IMR-90 (cell line): ENCODE measurements at regions of chr5 and their contacts with region 1.

Region 1: GRCh38 chr5:80960531-80961375 is 590 bp downstream of the RASGRF2 start:
- DNase-seq: peak; percentile 21
- ATAC-seq: peak; percentile 70
- H3K4me3 ChIP-seq: peak overlapping the region; percentile 86
- H3K27ac ChIP-seq: peak overlapping the region; percentile 86
- H3K4me1 ChIP-seq: peaks cover 7% of the 10 kb centered on the region; the same call in 1 of the 2 replicates
- H3K27me3 ChIP-seq: no peaks in the 10 kb centered on the region
- CTCF ChIP-seq: peak; percentile 30
- POLR2A ChIP-seq: no peak
- RAD21 ChIP-seq: no peak; the same call in 1 of the 2 replicates

Region 2: DNA sequence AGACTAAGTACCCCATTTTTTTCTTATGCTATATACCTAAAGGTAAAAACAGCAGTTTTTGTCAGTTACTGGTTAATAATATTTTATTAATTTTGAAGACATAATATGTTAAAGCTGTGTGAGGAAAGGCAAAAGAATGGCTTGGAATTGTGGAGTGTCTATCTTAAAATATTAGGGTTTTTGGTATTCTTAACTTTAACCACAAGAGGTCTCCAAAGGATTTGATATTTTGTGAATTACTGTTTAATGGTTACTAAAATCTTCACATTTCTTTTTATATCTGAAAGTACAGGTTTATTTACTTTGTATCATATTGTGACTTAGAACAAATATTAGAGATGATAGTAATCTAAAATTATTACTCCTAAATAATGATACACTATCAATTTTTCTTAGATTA is 274.0 kb before region 1 on chr5:
- CTCF ChIA-PET with region 1: no interaction called
- POLR2A ChIA-PET with region 1: no interaction called
- dilution Hi-C with region 1: no loop called
- in situ Hi-C with region 1: no loop called
- intact Hi-C with region 1: loop called (anchors 2 kb)
- DNase-seq: peak; percentile 36
- ATAC-seq: peak; percentile 44; the same call in 1 of the 2 replicates
- H3K4me3 ChIP-seq: no peak overlapping the region
- H3K27ac ChIP-seq: no peak overlapping the region
- H3K4me1 ChIP-seq: peaks cover 2% of the 10 kb centered on the region; the same call in 1 of the 2 replicates
- H3K27me3 ChIP-seq: no peaks in the 10 kb centered on the region
- CTCF ChIP-seq: peak; percentile 58
- POLR2A ChIP-seq: no peak
- RAD21 ChIP-seq: peak; percentile 60

Region 3: GRCh38 chr5:80736730-80737129 is 224.0 kb before region 1 on chr5:
- CTCF ChIA-PET with region 1: no interaction called
- POLR2A ChIA-PET with region 1: no interaction called
- dilution Hi-C with region 1: no loop called
- in situ Hi-C with region 1: no loop called
- intact Hi-C with region 1: no loop called
- DNase-seq: peak; percentile 55
- ATAC-seq: peak; percentile 49; the same call in 1 of the 2 replicates
- H3K4me3 ChIP-seq: no peak overlapping the region
- H3K27ac ChIP-seq: no peak overlapping the region
- H3K4me1 ChIP-seq: peaks cover 3% of the 10 kb centered on the region; the same call in 1 of the 2 replicates
- H3K27me3 ChIP-seq: no peaks in the 10 kb centered on the region
- CTCF ChIP-seq: no peak
- POLR2A ChIP-seq: no peak
- RAD21 ChIP-seq: no peak

Region 4: DNA sequence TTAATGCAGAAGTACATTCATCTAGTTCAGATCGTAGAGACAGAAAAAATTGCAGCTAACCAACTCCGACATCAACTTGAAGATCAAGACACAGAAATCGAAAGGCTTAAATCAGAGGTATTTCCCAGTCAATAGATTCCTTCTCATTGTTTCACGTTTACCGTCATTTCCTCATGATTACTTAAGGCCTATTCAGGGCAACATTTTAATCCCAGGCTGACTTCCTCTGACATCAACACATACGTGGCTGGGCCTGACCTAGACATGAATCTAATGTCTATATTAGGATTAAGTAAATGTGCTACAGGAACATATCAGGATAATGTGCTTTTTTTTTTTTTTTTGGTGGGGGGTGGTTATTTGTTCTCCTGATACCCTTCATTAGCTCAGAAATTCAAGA is 107.3 kb after region 1 on chr5:
- CTCF ChIA-PET with region 1: no interaction called
- POLR2A ChIA-PET with region 1: no interaction called
- dilution Hi-C with region 1: no loop called
- in situ Hi-C with region 1: no loop called
- intact Hi-C with region 1: loop called (anchors 5 kb)
- DNase-seq: no peak
- ATAC-seq: no peak
- H3K4me3 ChIP-seq: no peak overlapping the region
- H3K27ac ChIP-seq: no peak overlapping the region
- H3K4me1 ChIP-seq: peaks cover 5% of the 10 kb centered on the region
- H3K27me3 ChIP-seq: no peaks in the 10 kb centered on the region
- CTCF ChIP-seq: no peak
- POLR2A ChIP-seq: no peak
- RAD21 ChIP-seq: no peak

Region 5: GRCh38 chr5:81165493-81166119 is 204.9 kb after region 1 on chr5:
- CTCF ChIA-PET with region 1: interaction called, 5 read pairs
- POLR2A ChIA-PET with region 1: no interaction called
- dilution Hi-C with region 1: no loop called
- in situ Hi-C with region 1: no loop called
- intact Hi-C with region 1: loop called (anchors 2 kb)
- DNase-seq: peak; percentile 67
- ATAC-seq: peak; percentile 90
- H3K4me3 ChIP-seq: no peak overlapping the region
- H3K27ac ChIP-seq: no peak overlapping the region
- H3K4me1 ChIP-seq: no peaks in the 10 kb centered on the region; the same call in 1 of the 2 replicates
- H3K27me3 ChIP-seq: no peaks in the 10 kb centered on the region
- CTCF ChIP-seq: peak; percentile 78
- POLR2A ChIP-seq: no peak
- RAD21 ChIP-seq: peak; percentile 76

Region 6: GRCh38 chr5:81292130-81292529 is 331.4 kb after region 1 on chr5:
- CTCF ChIA-PET with region 1: no interaction called
- POLR2A ChIA-PET with region 1: no interaction called
- dilution Hi-C with region 1: no loop called
- in situ Hi-C with region 1: no loop called
- intact Hi-C with region 1: loop called (anchors 10 kb)
- DNase-seq: no peak
- ATAC-seq: no peak
- H3K4me3 ChIP-seq: no peak overlapping the region
- H3K27ac ChIP-seq: no peak overlapping the region
- H3K4me1 ChIP-seq: no peaks in the 10 kb centered on the region
- H3K27me3 ChIP-seq: no peaks in the 10 kb centered on the region
- CTCF ChIP-seq: no peak
- POLR2A ChIP-seq: no peak
- RAD21 ChIP-seq: no peak